GM12878 (cell line): ENCODE measurements at regions of chr5 and their contacts with region 1.

Region 1: DNA sequence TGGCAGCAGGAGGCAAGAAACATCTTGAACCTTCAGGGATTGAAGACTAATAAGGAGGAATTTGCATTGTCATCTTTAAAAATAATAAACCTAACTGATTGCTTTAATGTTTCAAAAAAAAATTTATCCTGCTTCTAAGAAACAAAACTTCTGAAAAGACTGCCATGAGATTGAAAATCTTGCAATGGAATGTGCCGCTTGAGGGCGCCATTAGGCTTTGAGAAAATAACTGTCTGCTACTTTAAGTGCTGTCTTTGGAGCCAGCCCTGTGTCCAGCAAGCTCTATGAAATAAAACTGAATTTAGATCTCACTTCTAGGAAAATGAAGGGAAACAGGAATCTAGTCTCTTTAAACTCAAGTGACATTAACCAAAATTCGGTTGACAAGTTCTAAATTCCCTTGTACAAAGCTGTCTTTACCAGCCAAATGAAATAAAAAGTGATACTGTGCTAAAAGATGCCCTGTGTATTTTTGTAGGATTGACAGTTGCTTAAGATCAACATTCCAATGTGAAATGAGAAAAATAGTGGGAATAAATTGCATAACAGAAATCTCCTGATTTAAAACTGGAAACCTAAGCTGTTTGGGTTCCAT is 79.4 kb downstream of the ESM1 start:
- DNase-seq: no peak
- ATAC-seq: peak; percentile 45; the same call in 1 of the 3 replicates
- H3K4me3 ChIP-seq: no peak overlapping the region
- H3K27ac ChIP-seq: no peak overlapping the region
- H3K4me1 ChIP-seq: peaks cover 4% of the 10 kb centered on the region; the same call in 1 of the 2 replicates
- H3K27me3 ChIP-seq: peaks cover 0 to 8% of the 10 kb centered on the region in 2 experiments; a peak in 2 of 4 replicates
- CTCF ChIP-seq: peak; percentile 35 to 63 (median 55); a peak in 5 of 6 replicates
- EP300 ChIP-seq: no peak
- POLR2A ChIP-seq: no peak
- RAD21 ChIP-seq: peak; percentile 70

Region 2: GRCh38 chr5:54944364-54944763 is 38.3 kb after region 1 on chr5:
- CTCF ChIA-PET with region 1: interaction called, 25 read pairs
- POLR2A ChIA-PET with region 1: no interaction called
- RAD21 ChIA-PET with region 1: no interaction called
- SMC1A ChIA-PET with region 1: interaction called, 3 read pairs
- in situ Hi-C with region 1: no loop called
- intact Hi-C with region 1: no loop called
- DNase-seq: no peak
- ATAC-seq: peak; percentile 61; the same call in 2 of the 3 replicates
- H3K4me3 ChIP-seq: no peak overlapping the region
- H3K27ac ChIP-seq: no peak overlapping the region
- H3K4me1 ChIP-seq: no peaks in the 10 kb centered on the region
- H3K27me3 ChIP-seq: no peaks in the 10 kb centered on the region; a peak in 1 of 4 replicates
- CTCF ChIP-seq: peak; percentile 49 to 59 (median 49)
- EP300 ChIP-seq: no peak
- POLR2A ChIP-seq: no peak
- RAD21 ChIP-seq: no peak

Region 3: DNA sequence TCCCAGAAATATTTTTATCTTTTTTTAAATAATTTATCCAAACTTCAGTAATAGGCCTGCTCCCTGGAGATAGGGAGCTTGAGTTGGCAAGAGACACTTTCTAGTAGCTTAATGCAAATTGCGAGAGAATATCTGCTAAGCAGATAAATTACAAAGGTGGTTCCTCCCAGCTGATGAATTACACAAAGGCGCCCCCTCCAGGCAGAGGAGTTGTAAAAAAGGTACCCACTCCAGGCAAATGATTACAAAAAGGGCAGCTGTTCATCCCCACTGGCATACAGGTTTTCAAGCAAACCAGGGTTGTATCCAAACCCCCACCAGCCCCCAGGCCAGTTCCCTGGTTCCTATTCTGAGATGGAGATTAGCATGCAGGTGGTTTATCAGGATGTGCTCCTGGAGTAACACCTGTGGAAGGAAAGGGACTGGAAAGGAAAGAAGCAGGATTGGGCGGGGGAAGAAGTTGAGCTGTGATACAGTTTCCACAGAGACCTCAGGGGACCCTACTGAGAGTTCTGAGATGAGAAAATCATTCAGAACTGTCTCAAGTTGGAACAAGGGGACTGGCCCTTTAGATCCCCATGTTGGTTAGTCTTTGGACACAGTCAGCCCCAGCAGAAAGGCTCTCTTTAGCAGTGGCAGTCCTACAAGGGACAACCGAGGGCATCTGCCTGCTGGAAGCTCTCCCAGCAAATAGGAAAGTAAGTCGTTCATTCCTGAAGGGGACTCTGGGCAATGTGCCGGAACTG is 53.8 kb after region 1 on chr5:
- CTCF ChIA-PET with region 1: interaction called, 14 read pairs
- POLR2A ChIA-PET with region 1: no interaction called
- RAD21 ChIA-PET with region 1: interaction called, 4 read pairs
- SMC1A ChIA-PET with region 1: interaction called, 3 read pairs
- in situ Hi-C with region 1: no loop called
- intact Hi-C with region 1: no loop called
- DNase-seq: no peak
- ATAC-seq: no peak
- H3K4me3 ChIP-seq: no peak overlapping the region
- H3K27ac ChIP-seq: no peak overlapping the region
- H3K4me1 ChIP-seq: no peaks in the 10 kb centered on the region
- H3K27me3 ChIP-seq: no peaks in the 10 kb centered on the region; a peak in 1 of 4 replicates
- CTCF ChIP-seq: peak in 2 of 3 experiments; percentile 25 to 27; a peak in 3 of 6 replicates
- EP300 ChIP-seq: no peak
- POLR2A ChIP-seq: no peak
- RAD21 ChIP-seq: no peak

Region 4: GRCh38 chr5:55072666-55073065 is 166.6 kb after region 1 on chr5:
- CTCF ChIA-PET with region 1: no interaction called
- POLR2A ChIA-PET with region 1: no interaction called
- RAD21 ChIA-PET with region 1: no interaction called
- SMC1A ChIA-PET with region 1: no interaction called
- in situ Hi-C with region 1: no loop called
- intact Hi-C with region 1: no loop called
- DNase-seq: no peak
- ATAC-seq: no peak
- H3K4me3 ChIP-seq: no peak overlapping the region
- H3K27ac ChIP-seq: no peak overlapping the region
- H3K4me1 ChIP-seq: no peaks in the 10 kb centered on the region
- H3K27me3 ChIP-seq: no peaks in the 10 kb centered on the region
- CTCF ChIP-seq: no peak
- EP300 ChIP-seq: no peak
- POLR2A ChIP-seq: no peak
- RAD21 ChIP-seq: no peak

Region 5: DNA sequence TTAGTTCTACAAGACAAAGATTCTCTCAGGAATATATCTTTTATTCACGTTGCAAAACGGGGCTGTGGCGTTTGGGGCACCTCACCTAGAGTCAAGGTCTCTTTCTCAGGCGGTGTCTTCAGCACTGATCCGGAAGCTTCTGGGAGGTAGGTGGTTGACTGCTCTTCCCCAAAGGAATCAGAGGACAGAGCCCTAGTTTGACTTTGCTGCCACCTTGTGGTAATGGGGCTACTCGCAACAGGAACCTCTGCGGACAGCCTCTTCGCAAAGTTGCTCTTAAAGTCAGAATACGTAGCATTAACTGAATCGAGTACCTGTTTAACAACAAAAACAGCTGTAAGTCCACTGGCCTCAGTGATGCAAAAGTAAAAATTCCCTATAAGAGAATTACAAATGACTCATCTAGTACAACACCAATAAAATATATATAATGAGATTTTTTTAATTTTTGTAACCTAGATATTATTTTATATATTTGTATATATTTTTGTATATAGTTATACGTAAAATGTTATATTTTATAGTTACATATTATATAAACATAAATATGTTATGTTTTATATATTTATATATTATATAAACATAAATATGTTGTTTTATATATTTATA is 240.6 kb after region 1 on chr5:
- CTCF ChIA-PET with region 1: interaction called, 31 read pairs
- POLR2A ChIA-PET with region 1: no interaction called
- RAD21 ChIA-PET with region 1: interaction called, 4 read pairs
- SMC1A ChIA-PET with region 1: interaction called, 7 read pairs
- in situ Hi-C with region 1: loop called (anchors 5 kb)
- intact Hi-C with region 1: loop called (anchors 1 kb)
- DNase-seq: peak; percentile 31
- ATAC-seq: peak; percentile 97
- H3K4me3 ChIP-seq: no peak overlapping the region
- H3K27ac ChIP-seq: no peak overlapping the region
- H3K4me1 ChIP-seq: no peaks in the 10 kb centered on the region
- H3K27me3 ChIP-seq: 0 out of 4 replicates have a peak, but pooled peaks cover 0 to 2% of the 10 kb centered on the region in 2 experiments
- CTCF ChIP-seq: peak; percentile 88 to 94 (median 92)
- EP300 ChIP-seq: no peak
- POLR2A ChIP-seq: no peak
- RAD21 ChIP-seq: peak; percentile 92

Region 6: DNA sequence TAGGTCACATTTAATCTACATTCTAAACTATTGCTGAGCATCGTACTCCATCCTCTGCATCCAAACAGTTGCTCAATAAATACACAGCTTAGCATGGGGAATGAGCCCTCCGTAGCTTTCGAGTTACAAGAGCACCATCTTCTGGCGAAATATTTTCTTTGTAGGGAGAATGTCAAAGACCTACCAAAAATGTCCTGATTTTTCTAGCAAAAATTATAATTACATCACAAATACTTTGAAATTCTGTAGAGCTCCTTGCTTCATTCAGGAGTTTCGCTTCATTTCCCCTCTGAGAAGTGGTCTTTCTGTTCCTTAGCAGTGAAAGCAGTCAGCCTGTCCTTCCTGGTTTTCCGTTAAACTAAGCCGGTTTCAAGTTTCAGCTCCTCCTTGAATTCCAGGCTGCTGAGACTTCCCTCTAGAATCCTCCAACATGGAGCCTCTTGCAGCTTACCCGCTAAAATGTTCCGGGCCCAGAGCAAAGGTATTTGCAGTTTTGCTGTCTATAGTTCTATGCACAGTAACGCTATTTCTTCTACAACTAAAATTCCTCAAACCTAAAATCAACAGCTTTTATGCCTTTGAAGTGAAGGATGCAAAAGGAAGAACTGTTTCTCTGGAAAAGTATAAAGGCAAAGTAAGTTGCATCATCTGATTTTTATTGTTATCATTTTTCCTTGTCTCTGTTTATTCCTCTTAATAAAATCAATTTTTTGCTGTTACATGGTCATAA is 253.9 kb after region 1 on chr5 and contains the start of gene GPX8:
- CTCF ChIA-PET with region 1: interaction called, 18 read pairs
- POLR2A ChIA-PET with region 1: no interaction called
- RAD21 ChIA-PET with region 1: interaction called, 9 read pairs
- SMC1A ChIA-PET with region 1: interaction called, 3 read pairs
- in situ Hi-C with region 1: no loop called
- intact Hi-C with region 1: no loop called
- DNase-seq: no peak
- ATAC-seq: peak; percentile 55; the same call in 2 of the 3 replicates
- H3K4me3 ChIP-seq: no peak within 1 kb of the TSS
- H3K27ac ChIP-seq: no peak within 1 kb of the TSS
- H3K4me1 ChIP-seq: no peaks in the 10 kb centered on the region
- H3K27me3 ChIP-seq: peaks cover 0 to 3% of the 10 kb centered on the region in 2 experiments; a peak in 1 of 4 replicates
- CTCF ChIP-seq: peak; percentile 6 to 42 (median 18); a peak in 2 of 6 replicates
- EP300 ChIP-seq: no peak
- POLR2A ChIP-seq: no peak
- RAD21 ChIP-seq: peak; percentile 40
- polyA plus RNA-seq, gene GPX8: not detected